SK-N-SH (cell line): ENCODE measurements at regions of chr19 and their contacts with region 1.

Region 1: GRCh38 chr19:47436712-47437401 is 17.5 kb upstream of the MEIS3 start:
- DNase-seq: peak; percentile 86
- H3K4me3 ChIP-seq: no peak overlapping the region; a peak in 1 of 4 replicates
- H3K27ac ChIP-seq: no peak overlapping the region
- H3K4me1 ChIP-seq: no peaks in the 10 kb centered on the region; a peak in 1 of 4 replicates
- H3K27me3 ChIP-seq: no peaks in the 10 kb centered on the region
- CTCF ChIP-seq: peak; percentile 86
- EP300 ChIP-seq: no peak
- RAD21 ChIP-seq: peak; percentile 98

Region 2: GRCh38 chr19:47296036-47296435 is 140.8 kb before region 1 on chr19:
- CTCF ChIA-PET with region 1: interaction called, 10 read pairs
- POLR2A ChIA-PET with region 1: no interaction called
- DNase-seq: peak; percentile 78
- H3K4me3 ChIP-seq: peak overlapping the region in 1 of 2 experiments; percentile 23; a peak in 1 of 4 replicates
- H3K27ac ChIP-seq: no peak overlapping the region
- H3K4me1 ChIP-seq: no peaks in the 10 kb centered on the region
- H3K27me3 ChIP-seq: no peaks in the 10 kb centered on the region
- CTCF ChIP-seq: peak; percentile 78
- EP300 ChIP-seq: no peak
- RAD21 ChIP-seq: peak; percentile 91

Region 3: DNA sequence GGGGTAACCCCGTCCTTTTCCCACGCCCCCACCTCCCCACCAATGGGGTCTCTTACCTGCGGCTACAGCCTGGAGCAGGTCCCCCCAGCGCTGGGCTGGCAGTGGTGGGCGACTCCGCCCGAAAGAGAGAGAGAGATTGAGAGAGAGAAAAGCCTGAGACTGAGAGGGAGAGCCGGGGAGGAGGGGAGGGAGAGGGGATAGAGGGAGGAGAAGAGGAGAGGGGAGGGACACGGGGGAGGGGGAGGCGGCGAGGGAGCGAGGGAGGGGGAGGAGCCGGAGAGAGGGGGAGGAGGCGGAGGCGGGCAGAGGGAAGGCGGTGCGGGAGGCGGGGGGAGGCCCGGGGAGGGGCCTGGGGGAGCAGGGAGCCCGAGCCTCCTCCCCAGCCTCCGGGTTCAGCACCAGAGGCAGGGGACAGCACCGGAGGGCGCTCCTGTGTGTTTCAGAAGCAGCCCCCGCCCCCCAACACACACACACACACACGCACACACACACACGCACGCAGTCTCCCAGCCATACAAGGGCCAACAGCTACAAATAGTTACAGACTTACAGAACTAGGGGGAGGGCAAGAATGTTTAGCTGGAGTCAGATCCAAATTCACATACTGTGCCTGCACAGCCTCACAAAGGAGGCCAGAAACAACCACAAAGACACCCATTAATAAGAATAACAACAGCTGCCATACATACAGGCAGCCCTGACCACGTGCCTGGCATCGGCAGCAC is 35.0 kb after region 1 on chr19 and contains the start of gene SLC8A2:
- CTCF ChIA-PET with region 1: interaction called, 14 read pairs
- POLR2A ChIA-PET with region 1: interaction called, 5 read pairs
- DNase-seq: peak; percentile 99
- H3K4me3 ChIP-seq: peak within 1 kb of the TSS; percentile 37 to 49; a peak in 3 of 4 replicates
- H3K27ac ChIP-seq: peak within 1 kb of the TSS in 1 of 2 experiments; percentile 48; a peak in 1 of 4 replicates
- H3K4me1 ChIP-seq: peaks cover 0 to 18% of the 10 kb centered on the region in 2 experiments; a peak in 1 of 4 replicates
- H3K27me3 ChIP-seq: peaks cover 6% of the 10 kb centered on the region; the same call in 1 of the 2 replicates
- CTCF ChIP-seq: no peak
- EP300 ChIP-seq: no peak
- RAD21 ChIP-seq: no peak
- polyA plus RNA-seq, gene SLC8A2: 0.29 and 0.58 TPM in 2 replicates

Region 4: GRCh38 chr19:47507012-47507411 is 70.2 kb after region 1 on chr19:
- CTCF ChIA-PET with region 1: interaction called, 168 read pairs
- POLR2A ChIA-PET with region 1: no interaction called
- DNase-seq: no peak
- H3K4me3 ChIP-seq: no peak overlapping the region
- H3K27ac ChIP-seq: peak overlapping the region in 1 of 2 experiments; percentile 89; a peak in 1 of 4 replicates
- H3K4me1 ChIP-seq: peaks cover 6 to 27% of the 10 kb centered on the region in 2 experiments; a peak in 2 of 4 replicates
- H3K27me3 ChIP-seq: no peaks in the 10 kb centered on the region
- CTCF ChIP-seq: no peak
- EP300 ChIP-seq: no peak
- RAD21 ChIP-seq: no peak

Region 5: DNA sequence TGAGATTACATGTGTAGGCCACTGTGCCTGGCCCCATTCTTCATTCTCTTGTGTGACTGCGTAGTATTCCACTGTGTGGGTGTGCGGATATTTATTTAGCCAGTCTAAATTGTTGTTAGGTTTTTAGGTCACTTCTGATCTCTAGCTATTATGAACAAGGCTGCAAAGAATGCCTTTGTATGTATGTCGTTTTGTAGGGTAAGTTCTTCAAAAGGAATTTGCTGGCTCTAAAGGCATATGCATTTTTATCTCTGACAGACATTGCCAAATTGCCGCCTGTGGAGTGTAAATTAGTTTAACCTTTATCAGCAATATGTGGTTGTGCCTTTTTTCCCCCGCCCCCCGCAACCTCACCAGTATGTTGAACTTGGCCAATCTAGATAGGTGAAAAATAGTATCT is 246.1 kb after region 1 on chr19:
- CTCF ChIA-PET with region 1: interaction called, 17 read pairs
- POLR2A ChIA-PET with region 1: no interaction called
- DNase-seq: no peak
- H3K4me3 ChIP-seq: no peak overlapping the region
- H3K27ac ChIP-seq: no peak overlapping the region
- H3K4me1 ChIP-seq: no peaks in the 10 kb centered on the region
- H3K27me3 ChIP-seq: no peaks in the 10 kb centered on the region
- CTCF ChIP-seq: no peak
- EP300 ChIP-seq: no peak
- RAD21 ChIP-seq: no peak

Region 6: GRCh38 chr19:47713046-47714021 is 276.5 kb after region 1 on chr19 and contains the start of gene EHD2:
- CTCF ChIA-PET with region 1: interaction called, 73 read pairs
- POLR2A ChIA-PET with region 1: no interaction called
- DNase-seq: peak; percentile 88
- H3K4me3 ChIP-seq: peak within 1 kb of the TSS; percentile 58 to 79
- H3K27ac ChIP-seq: peak within 1 kb of the TSS; percentile 30 to 67; a peak in 2 of 4 replicates
- H3K4me1 ChIP-seq: peaks cover 3 to 4% of the 10 kb centered on the region in 2 experiments; a peak in 3 of 4 replicates
- H3K27me3 ChIP-seq: no peaks in the 10 kb centered on the region
- CTCF ChIP-seq: peak; percentile 89
- EP300 ChIP-seq: peak in 1 of 2 experiments; percentile 36; a peak in 1 of 4 replicates
- RAD21 ChIP-seq: peak; percentile 82
- polyA plus RNA-seq, gene EHD2: 26.3 and 55.5 TPM in 2 replicates